IMR-90 (cell line): ENCODE measurements at regions of chr17 and their contacts with region 1.

Region 1: GRCh38 chr17:65785109-65785508 is 223.7 kb upstream of the AXIN2 start:
- DNase-seq: peak; percentile 97
- ATAC-seq: peak; percentile 87
- H3K4me3 ChIP-seq: no peak overlapping the region
- H3K27ac ChIP-seq: peak overlapping the region; percentile 11; the same call in 1 of the 2 replicates
- H3K4me1 ChIP-seq: peaks cover 4% of the 10 kb centered on the region; the same call in 1 of the 2 replicates
- H3K27me3 ChIP-seq: no peaks in the 10 kb centered on the region
- CTCF ChIP-seq: no peak
- POLR2A ChIP-seq: no peak
- RAD21 ChIP-seq: no peak

Region 2: GRCh38 chr17:65531263-65532100 is 253.6 kb before region 1 on chr17:
- CTCF ChIA-PET with region 1: no interaction called
- POLR2A ChIA-PET with region 1: no interaction called
- dilution Hi-C with region 1: no loop called
- in situ Hi-C with region 1: no loop called
- intact Hi-C with region 1: loop called (anchors 1 kb)
- DNase-seq: peak; percentile 88
- ATAC-seq: peak; percentile 93
- H3K4me3 ChIP-seq: no peak overlapping the region
- H3K27ac ChIP-seq: peak overlapping the region; percentile 63; the same call in 1 of the 2 replicates
- H3K4me1 ChIP-seq: peaks cover 26% of the 10 kb centered on the region
- H3K27me3 ChIP-seq: no peaks in the 10 kb centered on the region
- CTCF ChIP-seq: 0 out of 2 replicates have a peak, but pooled peaks have one; percentile 16
- POLR2A ChIP-seq: no peak
- RAD21 ChIP-seq: no peak

Region 3: DNA sequence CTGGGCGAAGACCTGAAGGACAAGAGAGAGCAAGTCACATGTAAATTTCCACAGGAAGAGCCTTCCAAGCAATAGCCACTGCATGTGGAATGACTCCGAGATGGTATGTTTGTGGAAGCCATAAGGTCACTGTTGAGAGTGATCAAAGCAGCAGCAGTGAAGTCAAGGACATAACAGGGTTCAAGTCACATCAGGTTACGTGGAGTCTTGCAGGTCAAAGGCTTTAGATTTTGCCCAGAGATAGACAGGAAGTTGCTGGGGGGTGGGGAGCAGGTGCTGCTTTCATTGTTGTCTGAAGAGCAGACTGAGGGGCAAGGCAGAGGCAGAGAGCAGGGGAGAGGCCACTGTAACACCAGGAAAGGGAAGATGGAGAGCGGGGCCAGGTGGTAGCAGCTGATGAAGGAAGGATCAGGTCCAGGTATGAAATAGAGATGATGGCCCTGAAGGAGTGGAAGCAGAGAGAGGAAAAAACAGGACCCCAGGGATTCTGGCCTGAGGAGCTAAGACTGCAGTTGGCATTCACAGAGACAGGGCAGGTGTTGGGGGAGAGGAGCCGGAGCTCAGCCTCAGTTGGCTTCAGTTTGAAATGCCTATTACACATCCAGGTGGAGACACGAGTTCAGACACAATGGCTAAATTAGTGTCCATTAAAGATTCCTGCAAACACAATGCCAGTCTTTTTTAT is 94.3 kb before region 1 on chr17:
- CTCF ChIA-PET with region 1: no interaction called
- POLR2A ChIA-PET with region 1: no interaction called
- dilution Hi-C with region 1: no loop called
- in situ Hi-C with region 1: no loop called
- intact Hi-C with region 1: no loop called
- DNase-seq: no peak
- ATAC-seq: no peak
- H3K4me3 ChIP-seq: no peak overlapping the region
- H3K27ac ChIP-seq: no peak overlapping the region
- H3K4me1 ChIP-seq: no peaks in the 10 kb centered on the region
- H3K27me3 ChIP-seq: no peaks in the 10 kb centered on the region
- CTCF ChIP-seq: no peak
- POLR2A ChIP-seq: no peak
- RAD21 ChIP-seq: no peak

Region 4: DNA sequence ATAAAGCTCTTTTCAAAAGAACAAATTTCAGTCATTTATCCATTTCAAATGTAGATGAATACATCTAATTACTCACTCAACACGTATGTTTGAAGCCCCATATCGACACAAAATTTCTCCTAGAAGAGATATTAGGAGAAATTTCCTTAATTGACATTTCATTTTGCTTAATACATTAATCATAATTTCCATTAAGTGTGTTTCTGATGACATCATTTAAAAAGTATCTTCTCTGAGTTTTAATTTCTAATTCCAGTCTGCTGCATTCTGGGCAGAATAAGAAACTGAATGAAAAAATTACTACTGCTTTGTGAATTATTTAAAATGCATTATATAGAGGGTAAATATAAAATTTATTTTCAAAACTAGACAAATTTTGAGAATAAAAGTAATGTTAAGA is 19.2 kb after region 1 on chr17:
- CTCF ChIA-PET with region 1: no interaction called
- POLR2A ChIA-PET with region 1: no interaction called
- dilution Hi-C with region 1: no loop called
- in situ Hi-C with region 1: no loop called
- intact Hi-C with region 1: no loop called
- DNase-seq: no peak
- ATAC-seq: no peak
- H3K4me3 ChIP-seq: no peak overlapping the region
- H3K27ac ChIP-seq: no peak overlapping the region
- H3K4me1 ChIP-seq: no peaks in the 10 kb centered on the region
- H3K27me3 ChIP-seq: no peaks in the 10 kb centered on the region
- CTCF ChIP-seq: no peak
- POLR2A ChIP-seq: no peak
- RAD21 ChIP-seq: no peak